CD14-positive monocyte (primary cell): ENCODE measurements at regions of chr9 and their contacts with region 1.

Region 1: DNA sequence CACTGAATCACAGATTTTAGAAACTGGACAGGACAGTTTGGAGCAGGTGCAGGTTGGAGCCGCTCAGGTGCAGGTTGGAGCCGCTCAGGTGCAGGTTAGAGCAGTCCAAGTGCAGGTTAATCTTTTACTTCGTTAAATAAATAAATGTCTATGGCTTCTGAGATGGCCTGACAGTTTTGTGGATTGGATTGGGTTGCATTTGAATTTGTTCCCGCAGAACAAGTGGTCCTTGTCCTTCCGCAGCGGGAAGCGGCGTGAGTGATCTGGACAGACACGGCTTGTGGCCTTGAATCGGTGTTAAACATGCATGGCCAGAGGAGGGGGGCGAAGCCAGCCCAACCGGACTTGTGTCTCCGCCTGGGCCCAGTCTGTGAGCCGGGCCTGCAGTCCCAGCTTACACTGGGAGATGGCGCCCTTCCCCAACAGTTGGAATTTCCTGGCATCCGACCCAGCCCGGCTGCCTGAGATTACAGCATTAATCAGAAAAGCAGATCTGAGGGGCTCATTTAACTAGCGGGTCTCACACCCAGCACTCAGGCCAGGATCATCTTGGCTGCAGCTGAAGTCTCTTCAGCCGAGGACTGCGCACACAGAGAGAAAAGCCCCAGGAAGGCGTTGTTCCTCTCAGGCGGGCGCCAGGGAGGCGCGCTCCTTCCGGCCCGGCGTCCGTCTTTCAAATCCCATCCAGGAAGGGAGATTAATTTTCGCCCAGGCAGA is 1.5 kb upstream of the OLFM1 start:
- DNase-seq: peak; percentile 8 to 36 (median 23)
- H3K4me3 ChIP-seq: peak overlapping the region in 1 of 3 experiments; percentile 53
- H3K4me3 Mint-ChIP-seq: peak overlapping the region; percentile 65 to 88
- H3K27ac ChIP-seq: no peak overlapping the region
- H3K27ac Mint-ChIP-seq: peak overlapping the region in 2 of 7 donors; percentile 20 to 53
- H3K4me1 ChIP-seq: peaks cover 10 to 13% of the 10 kb centered on the region in 2 donors
- H3K4me1 Mint-ChIP-seq: peaks cover 8% of the 10 kb centered on the region
- H3K27me3 ChIP-seq: peaks cover 25 to 67% of the 10 kb centered on the region in 2 donors
- H3K27me3 Mint-ChIP-seq: peaks cover 41 to 71% (median 60%) of the 10 kb centered on the region in 3 donors
- CTCF ChIP-seq: peak; percentile 55

Region 2: GRCh38 chr9:134871697-134872340 is 214.2 kb before region 1 on chr9:
- intact Hi-C with region 1: no loop called
- DNase-seq: no peak
- H3K4me3 ChIP-seq: no peak overlapping the region
- H3K4me3 Mint-ChIP-seq: no peak overlapping the region
- H3K27ac ChIP-seq: no peak overlapping the region
- H3K27ac Mint-ChIP-seq: no peak overlapping the region
- H3K4me1 ChIP-seq: peaks cover 5 to 13% of the 10 kb centered on the region in 2 donors
- H3K4me1 Mint-ChIP-seq: peaks cover 10% of the 10 kb centered on the region
- H3K27me3 ChIP-seq: no peaks in the 10 kb centered on the region
- H3K27me3 Mint-ChIP-seq: peaks cover 11 to 18% (median 14%) of the 10 kb centered on the region in 3 donors
- CTCF ChIP-seq: no peak

Region 3: GRCh38 chr9:135343837-135344522 is 258.0 kb after region 1 on chr9:
- intact Hi-C with region 1: loop called in 1 of 2 experiments (anchors 2 kb)
- DNase-seq: peak; percentile 10 to 35 (median 14)
- H3K4me3 ChIP-seq: no peak overlapping the region
- H3K4me3 Mint-ChIP-seq: no peak overlapping the region
- H3K27ac ChIP-seq: no peak overlapping the region
- H3K27ac Mint-ChIP-seq: no peak overlapping the region
- H3K4me1 ChIP-seq: no peaks in the 10 kb centered on the region
- H3K4me1 Mint-ChIP-seq: no peaks in the 10 kb centered on the region
- H3K27me3 ChIP-seq: peaks cover 0 to 12% of the 10 kb centered on the region in 2 donors
- H3K27me3 Mint-ChIP-seq: peaks cover 7 to 25% (median 23%) of the 10 kb centered on the region in 3 donors
- CTCF ChIP-seq: peak; percentile 95